Activated CD4-positive, alpha-beta memory T cell treated with anti-CD3 and anti-CD28 coated beads for 36 hours (primary cell): ENCODE measurements at regions of chr13 and their contacts with region 1.

Region 1: DNA sequence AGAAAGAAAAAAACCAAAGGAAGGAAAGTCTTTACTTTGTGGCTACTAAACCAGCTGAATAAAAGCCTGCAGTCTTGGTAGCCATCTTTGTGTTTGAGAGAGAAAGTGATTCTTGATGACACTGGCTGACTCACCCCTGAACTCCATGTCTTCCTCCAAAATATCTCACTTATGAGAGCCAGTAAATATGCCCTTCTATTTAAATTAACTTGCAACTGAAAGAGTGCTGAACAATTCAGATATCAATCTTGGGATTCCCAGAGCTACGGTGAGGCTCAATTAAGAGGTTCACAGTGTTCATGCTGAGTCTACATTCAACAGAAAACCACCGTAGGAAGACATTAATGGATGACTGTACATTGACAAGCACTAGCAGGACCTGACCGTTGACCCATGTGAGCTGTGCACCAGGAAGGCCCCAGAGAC is 57.9 kb downstream of the KCTD12 start:
- DNase-seq: peak; percentile 22
- H3K4me3 Mint-ChIP-seq: no peak overlapping the region
- H3K27ac Mint-ChIP-seq: peak overlapping the region; percentile 1
- H3K4me1 Mint-ChIP-seq: peaks cover 10% of the 10 kb centered on the region
- H3K27me3 Mint-ChIP-seq: peaks cover 2% of the 10 kb centered on the region

Region 2: DNA sequence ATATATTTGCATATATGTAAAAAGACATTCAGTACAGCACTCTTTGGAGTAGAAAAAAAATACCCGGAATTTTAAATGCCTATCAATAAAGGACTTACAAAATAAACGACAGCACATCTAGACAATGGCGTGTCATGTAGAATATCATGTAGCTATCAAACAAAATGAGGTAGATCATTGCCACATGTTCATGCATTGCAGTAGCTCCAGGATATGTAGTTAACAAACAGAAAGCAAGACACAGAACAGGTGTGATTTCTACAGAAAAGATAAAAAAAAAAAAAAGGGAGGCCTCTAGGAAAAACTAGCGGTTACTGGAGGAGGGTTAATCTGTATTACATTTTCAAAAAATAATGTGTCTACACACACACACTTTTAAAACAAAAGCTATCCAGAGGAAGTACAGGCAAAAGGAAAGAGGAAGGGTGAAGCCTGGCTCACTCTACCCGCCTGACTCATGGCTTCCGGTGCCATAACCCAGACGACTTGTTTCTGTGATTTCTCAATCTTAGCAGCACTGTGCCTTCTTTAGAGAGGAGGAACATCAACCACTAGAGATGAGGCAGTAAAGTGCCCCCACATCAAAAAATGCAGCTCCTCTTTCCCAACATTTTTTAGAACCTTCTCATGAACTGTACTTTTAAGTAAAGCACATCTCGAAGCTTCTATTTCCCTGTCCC is 51.0 kb after region 1 on chr13:
- CTCF ChIA-PET with region 1: interaction called, 23 read pairs
- POLR2A ChIA-PET with region 1: no interaction called
- intact Hi-C with region 1: loop called (anchors 1 kb)
- DNase-seq: peak; percentile 82
- H3K4me3 Mint-ChIP-seq: peak overlapping the region; percentile 60
- H3K27ac Mint-ChIP-seq: peak overlapping the region; percentile 77
- H3K4me1 Mint-ChIP-seq: peaks cover 33% of the 10 kb centered on the region
- H3K27me3 Mint-ChIP-seq: no peaks in the 10 kb centered on the region

Region 3: GRCh38 chr13:76886292-76887075 is 58.2 kb after region 1 on chr13 and contains the start of gene KCTD12:
- CTCF ChIA-PET with region 1: interaction called, 23 read pairs
- POLR2A ChIA-PET with region 1: no interaction called
- intact Hi-C with region 1: loop called (anchors 1 kb)
- DNase-seq: peak; percentile 77
- H3K4me3 Mint-ChIP-seq: peak within 1 kb of the TSS; percentile 84
- H3K27ac Mint-ChIP-seq: peak within 1 kb of the TSS; percentile 50
- H3K4me1 Mint-ChIP-seq: peaks cover 30% of the 10 kb centered on the region
- H3K27me3 Mint-ChIP-seq: peaks cover 12% of the 10 kb centered on the region
- total RNA-seq, gene KCTD12: 6.1 to 6.7 TPM